MCF 10A (cell line): ENCODE measurements at regions of chr6 and their contacts with region 1.

Region 1: DNA sequence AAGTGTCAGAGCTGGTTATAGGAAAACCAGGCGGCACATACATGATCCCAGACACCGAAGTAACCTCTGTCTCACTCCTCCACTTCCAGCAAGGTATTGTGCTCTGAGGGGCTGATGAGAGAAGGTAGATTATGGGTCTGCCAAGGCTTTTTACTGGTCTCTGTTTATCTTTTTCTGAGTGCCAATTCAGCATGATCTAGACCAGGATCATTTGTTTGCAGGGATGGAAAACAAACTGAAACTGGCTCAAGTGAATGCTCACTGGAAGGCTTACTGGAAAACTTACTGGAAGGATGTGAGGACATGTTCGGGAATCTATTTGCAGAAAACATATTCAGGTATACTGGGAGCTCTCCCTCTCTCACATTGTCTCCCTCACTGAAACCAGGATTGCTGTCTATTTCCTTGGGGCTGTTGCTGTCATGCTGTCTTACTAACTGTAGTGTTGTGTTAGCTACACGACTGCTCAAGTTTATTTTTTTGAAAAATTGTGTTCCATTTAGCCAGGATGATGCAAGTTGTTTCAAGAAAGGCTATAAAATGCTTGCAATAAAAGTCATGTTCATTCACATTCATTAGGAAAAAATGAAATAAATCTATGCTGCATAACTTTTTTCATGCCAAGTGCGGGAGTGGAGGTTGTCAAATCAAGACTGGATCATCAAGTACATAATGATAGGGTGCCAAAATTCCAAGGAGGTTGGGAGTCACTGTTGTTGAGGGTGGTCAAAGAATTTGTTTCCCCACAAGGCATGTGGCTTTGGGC is 37.0 kb downstream of the KLHL31 start:
- DNase-seq: peak; percentile 91
- H3K4me3 Mint-ChIP-seq: peak overlapping the region; percentile 61
- H3K27ac Mint-ChIP-seq: peak overlapping the region; percentile 89
- H3K4me1 Mint-ChIP-seq: peaks cover 54% of the 10 kb centered on the region
- H3K27me3 Mint-ChIP-seq: no peaks in the 10 kb centered on the region
- CTCF ChIP-seq: no peak

Region 2: GRCh38 chr6:53544470-53545308 is 83.8 kb before region 1 on chr6 and contains the start of gene GCLC:
- CTCF ChIA-PET with region 1: interaction called, 3 read pairs
- POLR2A ChIA-PET with region 1: interaction called, 22 read pairs
- intact Hi-C with region 1: no loop called
- DNase-seq: peak; percentile 96
- H3K4me3 Mint-ChIP-seq: peak within 1 kb of the TSS; percentile 93
- H3K27ac Mint-ChIP-seq: peak within 1 kb of the TSS; percentile 66
- H3K4me1 Mint-ChIP-seq: peaks cover 43% of the 10 kb centered on the region
- H3K27me3 Mint-ChIP-seq: no peaks in the 10 kb centered on the region
- CTCF ChIP-seq: peak; percentile 77
- total RNA-seq, gene GCLC: 74.8 and 108 TPM in 2 replicates

Region 3: DNA sequence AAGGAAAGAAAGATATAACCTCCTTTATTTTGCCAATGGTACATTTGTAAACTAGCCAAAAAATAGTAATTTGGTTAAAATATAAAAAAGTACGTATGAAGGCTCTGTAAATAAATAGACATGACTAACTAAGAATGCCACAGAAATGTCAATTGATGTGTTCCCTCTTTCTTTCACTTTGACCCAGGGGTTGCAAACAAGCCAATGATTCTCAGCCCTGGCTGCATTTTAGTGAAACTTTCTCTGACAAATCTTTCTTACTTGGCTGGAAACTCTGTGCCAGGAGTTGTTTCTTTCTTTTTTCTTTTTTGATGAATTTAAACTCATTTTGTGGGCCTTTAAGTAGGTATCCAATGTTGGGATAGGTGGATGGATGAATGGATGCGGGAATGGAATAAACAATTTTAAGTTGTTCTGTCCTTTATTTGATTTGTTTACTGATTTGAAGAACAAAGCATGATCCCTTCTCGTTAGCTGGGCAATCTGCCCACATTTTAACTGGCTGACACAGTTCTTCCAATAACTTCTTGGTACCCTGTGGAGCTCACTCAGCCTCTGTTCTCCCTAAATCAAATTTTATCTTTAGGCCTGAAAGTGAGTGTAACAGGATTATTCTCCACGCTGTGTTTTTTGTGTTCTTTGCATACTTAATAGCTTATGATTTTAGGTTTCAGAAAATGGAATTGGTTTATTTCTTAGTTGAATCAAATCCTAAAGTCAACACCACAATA is 25.0 kb before region 1 on chr6:
- CTCF ChIA-PET with region 1: interaction called, 6 read pairs
- POLR2A ChIA-PET with region 1: interaction called, 10 read pairs
- intact Hi-C with region 1: no loop called
- DNase-seq: peak; percentile 35
- H3K4me3 Mint-ChIP-seq: no peak overlapping the region
- H3K27ac Mint-ChIP-seq: peak overlapping the region; percentile 77
- H3K4me1 Mint-ChIP-seq: peaks cover 35% of the 10 kb centered on the region
- H3K27me3 Mint-ChIP-seq: no peaks in the 10 kb centered on the region
- CTCF ChIP-seq: no peak

Region 4: DNA sequence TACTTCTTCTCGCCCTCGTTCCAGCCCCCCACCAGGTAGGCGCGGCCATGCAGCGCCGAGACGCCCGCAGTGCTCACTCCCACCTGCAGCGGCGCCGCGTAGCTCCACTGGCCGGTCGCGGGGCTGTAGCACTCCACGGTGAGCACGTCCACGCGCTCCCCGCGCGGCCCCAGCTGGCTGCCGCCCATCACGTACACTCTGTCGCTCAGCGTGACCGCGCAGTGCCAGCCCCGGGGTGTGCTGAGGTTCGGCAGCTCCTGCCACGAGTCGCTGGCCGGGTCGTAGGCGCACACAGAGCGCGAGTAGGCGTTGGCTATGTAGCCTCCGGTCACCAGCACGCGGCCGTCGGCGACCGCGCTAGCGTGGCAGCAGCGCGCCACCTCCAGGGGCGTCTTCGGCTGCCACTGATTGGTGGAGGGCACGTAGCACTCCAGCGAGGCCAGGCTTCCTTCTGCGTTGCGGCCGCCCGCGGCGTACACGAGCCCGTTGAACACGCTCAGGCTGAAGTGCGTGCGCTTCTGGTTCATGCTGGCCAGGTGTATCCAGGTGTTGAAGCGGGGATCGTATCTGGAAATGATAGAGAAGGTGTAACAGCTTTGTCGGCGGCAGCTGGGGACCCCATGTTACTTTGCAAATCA is 23.3 kb after region 1 on chr6:
- CTCF ChIA-PET with region 1: interaction called, 6 read pairs
- POLR2A ChIA-PET with region 1: interaction called, 26 read pairs
- intact Hi-C with region 1: no loop called
- DNase-seq: peak; percentile 86
- H3K4me3 Mint-ChIP-seq: peak overlapping the region; percentile 94
- H3K27ac Mint-ChIP-seq: peak overlapping the region; percentile 84
- H3K4me1 Mint-ChIP-seq: peaks cover 34% of the 10 kb centered on the region
- H3K27me3 Mint-ChIP-seq: no peaks in the 10 kb centered on the region
- CTCF ChIP-seq: peak; percentile 23

Region 5: DNA sequence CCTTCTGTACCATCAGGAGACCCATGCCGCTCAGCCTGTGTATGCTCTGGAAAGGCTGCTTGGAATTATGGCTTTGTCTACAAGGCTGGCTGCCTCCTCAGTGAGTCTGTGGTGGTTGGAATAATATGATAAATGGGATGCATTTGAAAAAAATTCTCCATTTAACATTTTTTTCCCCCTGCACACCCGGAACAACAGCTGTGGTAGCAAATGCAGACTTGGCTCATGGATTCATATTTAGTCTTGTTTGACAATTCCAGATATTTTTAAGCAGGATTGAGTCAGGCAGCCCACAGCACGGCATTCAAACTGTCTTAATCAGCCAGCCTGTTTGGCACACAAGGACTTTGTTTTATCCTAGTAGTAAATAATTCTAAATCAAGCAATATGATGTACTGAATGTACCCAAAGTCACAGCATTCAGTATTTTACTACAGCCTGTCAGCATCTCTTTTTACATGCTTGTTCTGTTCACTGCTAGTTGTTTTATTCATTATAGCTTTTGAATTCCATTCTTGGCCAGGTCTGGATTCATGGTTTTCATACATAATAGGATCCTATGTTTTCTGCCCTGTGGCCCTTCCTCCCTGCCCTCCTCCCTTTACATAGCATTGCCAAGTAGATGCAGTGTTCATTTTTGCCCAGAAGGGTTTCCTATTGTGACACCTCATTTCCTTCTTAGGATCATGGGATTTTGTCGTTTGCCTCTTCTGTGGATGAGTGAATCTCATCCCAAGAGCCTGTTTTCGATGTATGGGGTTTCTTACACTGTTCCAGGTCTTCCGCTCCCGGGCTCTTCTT is 234.3 kb after region 1 on chr6:
- CTCF ChIA-PET with region 1: no interaction called
- POLR2A ChIA-PET with region 1: no interaction called
- intact Hi-C with region 1: no loop called
- DNase-seq: peak; percentile 70
- H3K4me3 Mint-ChIP-seq: no peak overlapping the region
- H3K27ac Mint-ChIP-seq: no peak overlapping the region
- H3K4me1 Mint-ChIP-seq: peaks cover 32% of the 10 kb centered on the region
- H3K27me3 Mint-ChIP-seq: no peaks in the 10 kb centered on the region
- CTCF ChIP-seq: no peak